ENCODE measurements at regions of chr14 and their contacts with region 1.

Region 1: DNA sequence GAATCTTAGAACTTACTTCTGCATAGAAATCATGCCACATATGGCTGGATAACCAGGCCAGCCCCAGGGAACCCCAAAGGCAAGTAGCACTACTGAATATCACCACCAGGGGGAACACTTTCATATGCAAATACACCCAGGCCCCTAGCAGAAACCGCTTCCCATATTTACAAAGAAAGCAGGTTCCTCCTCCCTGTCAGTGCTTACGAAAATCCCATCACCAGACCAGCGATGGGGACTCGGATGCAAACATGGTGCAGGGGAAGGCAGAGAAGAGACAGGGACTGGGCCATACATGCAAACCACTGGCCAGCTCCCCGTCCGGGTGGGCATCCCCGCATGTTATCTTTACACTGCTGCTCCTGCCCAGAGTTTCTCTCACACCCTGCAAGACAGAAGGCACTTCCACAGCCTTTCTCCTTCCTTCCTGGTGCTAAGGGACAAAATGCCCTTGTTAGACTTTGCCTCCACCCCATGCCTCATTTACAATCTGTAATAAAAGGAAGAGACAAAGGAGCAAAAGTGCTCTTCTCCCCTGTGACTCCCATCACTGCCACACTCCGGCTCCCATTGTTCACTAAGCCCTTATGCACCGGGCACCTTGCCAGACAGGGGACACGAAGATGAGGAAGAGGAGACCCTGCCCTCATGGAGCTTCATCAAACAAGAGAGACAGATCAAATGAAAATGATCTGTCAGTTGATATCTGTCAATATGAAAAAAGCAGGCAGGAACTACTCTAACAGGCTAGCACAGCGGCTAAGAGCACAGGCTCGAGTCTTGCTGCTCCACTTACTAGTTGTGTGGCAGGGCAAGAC is 62.3 kb downstream of the PTPN21 start:
- H3K4me3 ChIP-seq: no peak overlapping the region
- H3K27ac ChIP-seq: no peak overlapping the region
- H3K4me1 ChIP-seq: no peaks in the 10 kb centered on the region; the same call in 1 of the 2 replicates
- CTCF ChIP-seq: no peak

Region 2: DNA sequence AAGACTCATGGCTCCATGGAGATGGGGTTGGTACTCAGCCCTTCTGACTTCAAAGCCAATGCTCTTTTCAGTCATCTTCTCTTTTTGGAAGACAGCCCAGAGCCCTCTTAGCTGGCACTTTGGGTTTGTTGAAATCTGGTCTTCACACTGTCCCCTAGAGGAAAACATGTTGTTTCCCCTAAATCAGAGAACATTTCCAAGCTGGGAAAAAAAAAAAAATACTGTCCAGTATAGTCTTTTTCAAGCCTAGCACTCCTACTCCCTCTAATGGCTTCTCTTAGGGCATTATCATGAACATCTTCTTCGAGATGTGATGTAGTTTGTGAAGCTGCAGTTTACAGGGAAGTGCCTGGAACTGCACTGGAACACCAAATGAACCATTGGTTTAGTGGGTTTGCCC is 67.4 kb after region 1 on chr14:
- CTCF ChIA-PET with region 1: interaction called, 10 read pairs
- POLR2A ChIA-PET with region 1: no interaction called
- H3K4me3 ChIP-seq: no peak overlapping the region
- H3K27ac ChIP-seq: no peak overlapping the region
- H3K4me1 ChIP-seq: peaks cover 9% of the 10 kb centered on the region
- CTCF ChIP-seq: peak; percentile 54